Panc1 (cell line): ENCODE measurements at regions of chr17 and their contacts with region 1.

Region 1: GRCh38 chr17:29133146-29133713 is 47.0 kb downstream of the MYO18A start:
- DNase-seq: no peak
- ATAC-seq: peak; percentile 82
- H3K4me3 ChIP-seq: no peak overlapping the region
- H3K27ac ChIP-seq: peak overlapping the region; percentile 6; the same call in 1 of the 2 replicates
- H3K4me1 ChIP-seq: peaks cover 21% of the 10 kb centered on the region
- H3K27me3 ChIP-seq: no peaks in the 10 kb centered on the region
- CTCF ChIP-seq: no peak

Region 2: DNA sequence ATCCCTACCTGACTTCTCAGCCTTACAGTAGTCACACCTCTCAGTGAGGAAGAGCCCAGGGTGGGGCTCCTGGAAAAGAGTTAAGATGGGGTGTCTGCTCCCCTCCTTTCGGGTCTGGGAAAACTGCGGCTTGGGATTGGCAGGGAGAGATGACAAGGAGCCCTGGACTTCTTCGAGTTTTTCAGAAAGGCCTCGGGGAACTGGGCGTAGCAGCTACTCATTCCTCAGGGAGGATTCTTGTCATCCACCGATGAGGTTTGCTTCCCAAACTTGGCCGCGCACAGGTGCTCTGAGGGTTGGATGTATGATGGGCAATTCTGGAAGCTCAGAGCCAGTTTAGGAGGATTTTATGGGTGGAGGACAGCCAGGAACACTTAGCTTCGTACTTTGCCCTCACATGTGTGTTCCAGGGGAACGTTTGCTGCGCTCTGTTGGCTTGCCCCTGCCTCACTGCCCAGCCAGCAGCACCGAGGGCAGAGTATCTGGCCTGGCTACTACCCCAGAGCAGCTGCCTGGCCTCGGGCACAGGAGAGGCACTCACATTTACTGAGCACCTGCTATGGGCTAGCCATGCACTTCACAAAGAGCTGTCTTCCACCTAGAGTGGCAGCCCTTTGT is 141.6 kb before region 1 on chr17:
- CTCF ChIA-PET with region 1: no interaction called
- POLR2A ChIA-PET with region 1: interaction called, 12 read pairs
- in situ Hi-C with region 1: no loop called
- intact Hi-C with region 1: no loop called
- DNase-seq: no peak
- ATAC-seq: peak; percentile 4; the same call in 1 of the 2 replicates
- H3K4me3 ChIP-seq: no peak overlapping the region
- H3K27ac ChIP-seq: no peak overlapping the region
- H3K4me1 ChIP-seq: no peaks in the 10 kb centered on the region
- H3K27me3 ChIP-seq: no peaks in the 10 kb centered on the region
- CTCF ChIP-seq: no peak

Region 3: DNA sequence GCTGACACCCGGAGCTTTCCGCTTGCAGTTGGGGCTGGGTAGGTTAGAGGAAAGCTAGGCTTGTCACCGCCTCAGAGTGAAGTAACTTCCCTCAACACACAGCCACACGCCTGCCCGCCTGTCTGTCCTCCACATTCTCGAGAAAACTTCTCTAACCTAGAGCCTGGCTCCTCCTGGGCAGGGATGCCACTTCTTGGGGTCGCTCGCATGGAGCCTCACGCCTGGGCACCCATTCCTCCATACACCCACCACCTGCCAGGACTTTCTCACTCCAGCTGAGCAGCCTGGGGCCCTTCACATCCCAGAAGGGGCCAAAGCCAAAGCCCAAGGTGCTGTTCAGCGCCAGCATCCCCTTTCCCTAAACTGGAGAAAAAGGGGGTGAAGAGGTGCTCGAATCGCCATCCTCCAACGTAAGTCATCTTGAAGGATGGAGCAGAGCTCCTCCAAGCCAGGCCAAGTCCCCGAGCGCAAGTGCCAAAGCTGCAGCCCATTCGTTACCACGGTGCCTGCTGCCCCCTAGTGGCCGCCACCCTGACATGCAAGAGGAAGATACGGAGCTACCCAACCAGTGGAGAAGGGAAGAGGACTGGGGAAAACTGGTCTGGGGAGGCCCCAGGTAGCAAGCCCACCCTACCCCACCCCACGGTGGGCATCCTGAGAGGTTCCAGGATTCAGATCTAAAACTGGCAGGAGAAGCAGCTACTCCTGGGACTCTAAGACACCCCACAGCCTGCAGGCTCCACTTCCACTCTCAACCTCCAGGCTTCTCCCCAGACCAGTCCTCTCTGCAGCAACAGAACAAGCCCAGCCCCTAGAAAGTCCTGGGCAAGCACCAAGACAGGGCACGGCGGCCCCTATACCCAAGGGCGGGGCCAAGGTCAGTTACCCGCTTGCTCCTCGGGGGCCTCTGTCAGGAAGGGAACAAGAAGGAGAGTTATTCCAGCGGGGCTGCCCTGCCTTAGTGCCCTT is 16.1 kb before region 1 on chr17:
- CTCF ChIA-PET with region 1: interaction called, 10 read pairs
- POLR2A ChIA-PET with region 1: no interaction called
- in situ Hi-C with region 1: no loop called
- intact Hi-C with region 1: no loop called
- DNase-seq: peak; percentile 35
- ATAC-seq: peak; percentile 76
- H3K4me3 ChIP-seq: no peak overlapping the region
- H3K27ac ChIP-seq: no peak overlapping the region
- H3K4me1 ChIP-seq: peaks cover 5% of the 10 kb centered on the region; the same call in 1 of the 2 replicates
- H3K27me3 ChIP-seq: no peaks in the 10 kb centered on the region
- CTCF ChIP-seq: peak; percentile 96